ENCODE measurements at regions of chr5 and their contacts with region 1.

Region 1: GRCh38 chr5:76805850-76806505 is 12.9 kb upstream of the F2RL1 start:
- DNase-seq: peak; percentile 77
- H3K4me3 ChIP-seq: no peak overlapping the region
- H3K27ac ChIP-seq: peak overlapping the region; percentile 83
- H3K4me1 ChIP-seq: peaks cover 40% of the 10 kb centered on the region
- H3K27me3 ChIP-seq: no peaks in the 10 kb centered on the region
- CTCF ChIP-seq: no peak
- POLR2A ChIP-seq: no peak

Region 2: DNA sequence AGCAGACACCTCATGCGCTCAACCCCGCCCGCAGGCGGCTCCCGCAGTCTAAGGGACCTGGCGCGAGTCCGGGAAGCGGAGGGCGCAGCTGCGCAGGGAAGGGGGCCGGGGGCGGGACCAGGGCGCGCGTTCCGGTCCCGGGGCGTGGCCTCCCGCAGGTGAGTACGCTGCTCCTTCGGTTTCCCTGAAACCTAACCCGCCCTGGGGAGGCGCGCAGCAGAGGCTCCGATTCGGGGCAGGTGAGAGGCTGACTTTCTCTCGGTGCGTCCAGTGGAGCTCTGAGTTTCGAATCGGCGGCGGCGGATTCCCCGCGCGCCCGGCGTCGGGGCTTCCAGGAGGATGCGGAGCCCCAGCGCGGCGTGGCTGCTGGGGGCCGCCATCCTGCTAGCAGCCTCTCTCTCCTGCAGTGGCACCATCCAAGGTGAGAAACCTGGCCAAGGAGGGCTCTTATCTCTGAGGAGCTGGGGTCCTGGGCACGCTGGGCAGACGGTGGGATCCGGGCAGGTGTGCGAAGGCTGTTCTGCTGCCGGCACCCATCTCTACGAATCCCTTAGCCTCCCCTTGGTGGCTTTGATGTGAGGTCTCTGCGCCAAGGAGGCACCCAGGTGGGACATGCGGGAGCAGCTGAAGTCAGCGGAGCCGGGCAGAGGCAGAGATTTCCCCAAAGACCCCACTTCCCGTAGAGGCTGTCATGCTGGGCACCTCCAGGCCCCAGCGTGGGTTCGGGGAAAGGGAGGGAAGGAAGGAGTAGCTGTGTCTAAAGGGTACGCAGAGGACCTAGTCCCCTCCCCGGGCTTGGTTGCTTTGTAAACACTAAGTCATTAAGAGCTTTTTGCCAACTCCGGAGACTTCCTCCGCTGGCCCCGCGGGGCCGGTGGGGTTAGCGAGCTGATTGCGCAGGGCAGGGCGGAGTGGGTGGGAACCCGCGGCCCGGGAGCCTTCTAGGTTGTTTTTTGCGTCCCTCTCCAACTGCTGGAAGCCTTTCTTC is 13.2 kb after region 1 on chr5 and contains the start of gene F2RL1:
- CTCF ChIA-PET with region 1: interaction called, 52 read pairs
- POLR2A ChIA-PET with region 1: interaction called, 3 read pairs
- dilution Hi-C with region 1: no loop called
- intact Hi-C with region 1: loop called (anchors 1 kb)
- DNase-seq: peak; percentile 61
- H3K4me3 ChIP-seq: peak within 1 kb of the TSS; percentile 68 to 82 (median 80)
- H3K27ac ChIP-seq: peak within 1 kb of the TSS; percentile 75
- H3K4me1 ChIP-seq: peaks cover 21% of the 10 kb centered on the region
- H3K27me3 ChIP-seq: no peaks in the 10 kb centered on the region
- CTCF ChIP-seq: no peak
- POLR2A ChIP-seq: no peak
- total RNA-seq, gene F2RL1: 21.9 and 42.6 TPM in 2 replicates

Region 3: GRCh38 chr5:76908166-76908565 is 102.2 kb after region 1 on chr5:
- CTCF ChIA-PET with region 1: no interaction called
- POLR2A ChIA-PET with region 1: no interaction called
- dilution Hi-C with region 1: no loop called
- intact Hi-C with region 1: no loop called
- DNase-seq: no peak
- H3K4me3 ChIP-seq: no peak overlapping the region
- H3K27ac ChIP-seq: no peak overlapping the region
- H3K4me1 ChIP-seq: no peaks in the 10 kb centered on the region
- H3K27me3 ChIP-seq: no peaks in the 10 kb centered on the region
- CTCF ChIP-seq: no peak
- POLR2A ChIP-seq: no peak

Measured in endothelial cell of umbilical vein (primary cell).